ENCODE measurements at regions of chr6 and their contacts with region 1.

Region 1: DNA sequence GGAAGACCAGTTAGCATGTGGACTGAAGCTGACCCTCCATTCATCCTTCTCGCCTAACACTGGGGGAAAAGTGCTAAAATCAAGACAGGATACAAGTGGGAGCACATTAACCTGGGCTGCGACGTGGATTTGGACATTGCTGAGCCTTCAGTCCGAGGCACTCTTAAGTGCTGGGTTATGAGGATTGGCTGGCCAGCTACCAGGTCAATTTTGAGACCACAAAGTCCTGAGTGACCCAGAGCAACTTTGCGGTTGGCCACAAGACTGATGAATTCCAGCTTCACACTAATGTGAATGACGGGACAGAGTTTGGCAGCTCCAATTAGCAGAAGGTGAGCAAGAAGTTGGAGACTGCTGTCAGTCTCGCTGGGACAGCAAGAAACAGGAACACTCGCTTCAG is 20.7 kb downstream of the FUCA2 start:
- DNase-seq: no peak
- ATAC-seq: peak in 3 of 4 donors; percentile 37 to 60 (median 40)
- H3K4me3 ChIP-seq: no peak overlapping the region
- H3K27ac ChIP-seq: no peak overlapping the region
- H3K4me1 ChIP-seq: no peaks in the 10 kb centered on the region
- H3K27me3 ChIP-seq: no peaks in the 10 kb centered on the region
- CTCF ChIP-seq: no peak
- POLR2A ChIP-seq: no peak

Region 2: GRCh38 chr6:143531720-143532499 is 41.1 kb after region 1 on chr6:
- intact Hi-C with region 1: loop called in 1 of 10 experiments (anchors 2 kb)
- DNase-seq: no peak
- ATAC-seq: no peak
- H3K4me3 ChIP-seq: no peak overlapping the region
- H3K27ac ChIP-seq: no peak overlapping the region
- H3K4me1 ChIP-seq: peaks cover 0 to 20% (median 0%) of the 10 kb centered on the region in 12 donors
- H3K27me3 ChIP-seq: no peaks in the 10 kb centered on the region
- CTCF ChIP-seq: no peak
- POLR2A ChIP-seq: no peak

Region 3: GRCh38 chr6:143607974-143608373 is 117.2 kb after region 1 on chr6:
- intact Hi-C with region 1: no loop called
- DNase-seq: no peak
- ATAC-seq: peak in 3 of 4 donors; percentile 22 to 46 (median 41)
- H3K4me3 ChIP-seq: no peak overlapping the region
- H3K27ac ChIP-seq: no peak overlapping the region
- H3K4me1 ChIP-seq: peaks cover 0 to 18% (median 11%) of the 10 kb centered on the region in 12 donors
- H3K27me3 ChIP-seq: no peaks in the 10 kb centered on the region
- CTCF ChIP-seq: no peak
- POLR2A ChIP-seq: no peak

Region 4: GRCh38 chr6:143634493-143634892 is 143.7 kb after region 1 on chr6:
- intact Hi-C with region 1: no loop called
- DNase-seq: no peak
- ATAC-seq: no peak
- H3K4me3 ChIP-seq: no peak overlapping the region
- H3K27ac ChIP-seq: no peak overlapping the region
- H3K4me1 ChIP-seq: no peaks in the 10 kb centered on the region
- H3K27me3 ChIP-seq: no peaks in the 10 kb centered on the region
- CTCF ChIP-seq: no peak
- POLR2A ChIP-seq: no peak

Region 5: DNA sequence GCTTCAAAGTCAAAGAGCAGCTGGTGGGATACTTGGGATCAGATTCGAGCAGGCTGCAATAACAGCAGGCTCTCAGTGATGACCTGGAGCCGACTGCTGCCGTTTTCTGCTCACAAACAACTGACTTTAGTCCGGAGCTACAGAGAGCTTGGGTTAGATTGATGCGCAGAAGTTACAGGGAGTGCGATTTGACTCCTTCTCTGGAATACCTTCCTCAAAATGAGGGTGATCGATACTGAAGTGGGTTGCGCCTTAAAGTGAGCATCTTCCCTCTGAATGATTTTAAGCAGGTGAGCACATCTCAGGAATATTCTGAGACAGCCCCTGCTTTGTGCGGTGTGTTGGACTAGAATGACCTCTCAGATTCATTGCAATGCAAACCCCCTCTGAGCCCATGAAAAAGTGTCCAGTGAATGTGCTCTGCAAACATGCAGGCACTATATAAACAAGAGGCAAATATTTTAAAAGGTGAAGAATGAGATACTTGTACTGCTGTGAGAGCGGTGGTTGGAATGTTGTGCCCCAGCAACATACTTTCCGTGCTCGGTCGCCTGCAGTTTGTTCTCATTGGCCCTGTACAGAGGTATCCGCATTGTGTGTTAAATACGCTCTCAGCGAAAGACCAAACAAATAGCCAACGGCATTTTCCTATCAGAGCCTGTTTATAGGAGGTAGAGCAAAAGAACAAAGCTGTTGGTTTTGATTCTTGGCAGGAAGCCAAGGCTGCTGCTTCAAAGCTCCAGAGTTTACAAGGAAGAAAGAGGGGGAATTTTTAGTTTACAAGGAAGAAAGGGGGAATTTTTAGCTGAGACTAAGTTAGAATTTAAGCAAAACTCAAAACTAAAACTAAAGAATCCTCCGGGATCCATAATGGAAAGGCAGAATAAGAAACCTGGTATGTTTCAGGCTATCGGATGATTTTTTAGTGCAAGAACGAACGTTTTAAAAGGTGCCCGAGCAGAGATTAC is 254.7 kb after region 1 on chr6:
- intact Hi-C with region 1: no loop called
- DNase-seq: peak in 1 of 5 donors; percentile 49
- ATAC-seq: peak; percentile 27 to 65 (median 60)
- H3K4me3 ChIP-seq: peak overlapping the region in 6 of 12 donors; percentile 1 to 15 (median 12)
- H3K27ac ChIP-seq: peak overlapping the region; percentile 26 to 81 (median 65)
- H3K4me1 ChIP-seq: peaks cover 7 to 78% (median 58%) of the 10 kb centered on the region in 12 donors
- H3K27me3 ChIP-seq: no peaks in the 10 kb centered on the region
- CTCF ChIP-seq: no peak
- POLR2A ChIP-seq: no peak

Measured in heart left ventricle (tissue), 16 donors.